K562 (cell line): ENCODE measurements at regions of chr3 and their contacts with region 1.

Region 1: GRCh38 chr3:50611464-50612233 is at the start of gene CISH:
- DNase-seq: peak; percentile 84 to 97 (median 90)
- ATAC-seq: peak; percentile 85
- H3K4me3 ChIP-seq: peak within 1 kb of the TSS; percentile 87
- H3K27ac ChIP-seq: peak within 1 kb of the TSS; percentile 85
- H3K4me1 ChIP-seq: peaks cover 21 to 39% of the 10 kb centered on the region in 2 experiments; a peak in 4 of 5 replicates
- H3K27me3 ChIP-seq: no peaks in the 10 kb centered on the region
- CTCF ChIP-seq: peak; percentile 18 to 52 (median 39); a peak in 5 of 6 replicates
- EP300 ChIP-seq: peak; percentile 32
- POLR2A ChIP-seq: peak; percentile 81
- RAD21 ChIP-seq: no peak; a peak in 1 of 4 replicates
- polyA plus RNA-seq, gene CISH: 1.7 to 3.5 TPM

Region 2: DNA sequence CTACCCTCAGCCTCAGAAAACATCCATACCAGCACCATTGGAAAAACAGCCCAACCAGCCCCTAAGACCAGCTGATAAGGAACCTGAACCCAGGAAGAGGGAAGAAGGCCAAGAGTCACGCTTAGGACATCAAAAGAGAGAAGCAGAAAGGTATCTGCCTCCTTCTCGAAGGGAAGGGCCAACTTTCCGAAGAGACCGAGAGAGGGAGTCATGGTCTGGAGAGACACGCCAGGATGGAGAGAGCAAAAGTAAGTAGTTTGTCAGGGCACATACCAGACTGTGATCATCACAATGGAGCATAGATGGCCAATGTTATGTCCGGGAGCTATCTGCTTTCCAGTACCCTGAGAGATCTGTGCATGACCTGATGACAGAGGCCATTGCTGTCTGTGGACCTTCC is 553.9 kb before region 1 on chr3:
- CTCF ChIA-PET with region 1: no interaction called
- POLR2A ChIA-PET with region 1: no interaction called
- in situ Hi-C with region 1: no loop called
- intact Hi-C with region 1: no loop called
- DNase-seq: no peak
- ATAC-seq: no peak
- H3K4me3 ChIP-seq: no peak overlapping the region
- H3K27ac ChIP-seq: no peak overlapping the region
- H3K4me1 ChIP-seq: no peaks in the 10 kb centered on the region
- H3K27me3 ChIP-seq: no peaks in the 10 kb centered on the region
- CTCF ChIP-seq: no peak
- EP300 ChIP-seq: no peak
- POLR2A ChIP-seq: no peak
- RAD21 ChIP-seq: no peak

Region 3: GRCh38 chr3:50568947-50569749 is 42.5 kb before region 1 on chr3 and contains the start of gene HEMK1:
- CTCF ChIA-PET with region 1: interaction called, 56 read pairs
- POLR2A ChIA-PET with region 1: interaction called, 10 read pairs
- in situ Hi-C with region 1: no loop called
- intact Hi-C with region 1: loop called (anchors 1 kb)
- DNase-seq: peak; percentile 95 to 98 (median 97)
- ATAC-seq: peak; percentile 90
- H3K4me3 ChIP-seq: peak within 1 kb of the TSS; percentile 90
- H3K27ac ChIP-seq: peak within 1 kb of the TSS; percentile 80
- H3K4me1 ChIP-seq: peaks cover 36 to 42% of the 10 kb centered on the region in 2 experiments; a peak in 4 of 5 replicates
- H3K27me3 ChIP-seq: no peaks in the 10 kb centered on the region
- CTCF ChIP-seq: no peak
- EP300 ChIP-seq: no peak
- POLR2A ChIP-seq: peak; percentile 57
- RAD21 ChIP-seq: no peak
- polyA plus RNA-seq, gene HEMK1: 2.0 to 5.2 TPM

Region 4: DNA sequence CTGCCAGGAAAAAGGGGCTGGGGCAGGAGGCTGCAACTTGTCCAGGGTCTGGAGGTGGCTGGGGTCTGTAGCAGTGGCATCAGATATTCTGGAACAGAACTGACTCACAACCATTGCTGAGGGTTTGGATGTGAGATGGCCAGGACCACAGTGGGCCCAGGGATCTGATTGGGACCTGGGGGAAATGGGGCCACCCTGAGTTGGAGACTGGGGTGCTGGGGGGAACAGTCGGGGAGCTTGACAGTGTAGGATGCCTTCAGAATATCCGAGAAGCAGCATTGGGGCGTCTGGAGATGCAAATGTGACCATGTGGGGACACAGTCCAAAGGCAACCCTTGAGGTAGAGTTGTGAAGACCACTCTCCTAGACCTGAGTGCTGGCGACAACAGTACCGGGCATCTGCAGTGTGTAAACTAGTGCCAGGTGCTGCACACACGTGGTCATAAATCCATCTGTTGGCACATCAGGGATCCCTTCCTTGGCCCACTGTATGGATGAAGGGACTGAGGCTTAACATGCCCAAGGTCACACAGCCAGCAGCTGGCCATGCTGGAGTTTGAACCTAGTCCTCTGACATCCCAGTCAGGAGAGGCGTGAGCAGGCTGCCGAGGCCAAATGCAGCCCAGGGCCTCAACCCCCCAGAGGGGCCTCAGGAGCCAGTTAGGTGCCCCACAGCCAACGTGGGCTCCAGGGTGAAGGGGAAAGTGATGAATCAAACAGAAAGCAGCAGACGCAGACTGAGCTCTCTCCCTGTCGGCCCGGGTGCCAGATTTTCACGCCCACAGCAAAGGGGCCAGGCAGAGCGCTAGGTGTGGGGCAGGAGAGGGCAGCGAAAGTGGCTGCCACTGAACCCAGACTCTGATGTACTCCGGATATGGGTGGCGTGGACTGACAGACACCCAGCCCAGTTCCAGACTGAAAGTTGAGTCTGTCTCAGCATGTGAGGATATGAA is 23.6 kb before region 1 on chr3:
- CTCF ChIA-PET with region 1: no interaction called
- POLR2A ChIA-PET with region 1: interaction called, 22 read pairs
- in situ Hi-C with region 1: no loop called
- intact Hi-C with region 1: loop called (anchors 1 kb)
- DNase-seq: no peak
- ATAC-seq: no peak
- H3K4me3 ChIP-seq: no peak overlapping the region
- H3K27ac ChIP-seq: peak overlapping the region; percentile 93
- H3K4me1 ChIP-seq: peaks cover 49 to 52% of the 10 kb centered on the region in 2 experiments
- H3K27me3 ChIP-seq: no peaks in the 10 kb centered on the region
- CTCF ChIP-seq: no peak
- EP300 ChIP-seq: no peak
- POLR2A ChIP-seq: no peak
- RAD21 ChIP-seq: no peak

Region 5: DNA sequence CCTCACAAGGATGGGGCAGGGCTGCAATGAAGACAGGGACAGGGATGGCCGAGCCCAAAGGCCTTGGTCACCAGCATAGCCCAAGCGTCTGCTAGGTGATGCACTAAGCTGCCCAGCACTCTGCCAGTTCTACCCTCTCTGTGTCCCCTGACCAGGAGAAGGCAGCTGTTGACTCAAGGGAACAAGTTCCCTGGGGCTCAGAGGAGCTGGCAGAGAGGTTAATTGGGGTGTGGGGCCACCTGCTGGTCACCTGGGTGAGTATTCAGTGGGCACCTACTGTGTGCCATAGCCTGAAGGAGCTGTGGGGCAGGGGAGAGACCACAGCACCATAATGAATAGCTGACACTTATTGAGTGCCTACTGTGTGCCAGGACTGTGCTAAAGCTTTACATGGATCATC is 41.1 kb after region 1 on chr3:
- CTCF ChIA-PET with region 1: interaction called, 3 read pairs
- POLR2A ChIA-PET with region 1: interaction called, 3 read pairs
- in situ Hi-C with region 1: no loop called
- intact Hi-C with region 1: loop called (anchors 1 kb)
- DNase-seq: peak; percentile 32 to 51 (median 42)
- ATAC-seq: peak; percentile 78
- H3K4me3 ChIP-seq: no peak overlapping the region
- H3K27ac ChIP-seq: no peak overlapping the region
- H3K4me1 ChIP-seq: peaks cover 0 to 4% of the 10 kb centered on the region in 2 experiments; a peak in 2 of 5 replicates
- H3K27me3 ChIP-seq: peaks cover 0 to 4% of the 10 kb centered on the region in 2 experiments; a peak in 1 of 5 replicates
- CTCF ChIP-seq: peak; percentile 44 to 60 (median 52)
- EP300 ChIP-seq: no peak
- POLR2A ChIP-seq: no peak
- RAD21 ChIP-seq: peak; percentile 30 to 65

Region 6: DNA sequence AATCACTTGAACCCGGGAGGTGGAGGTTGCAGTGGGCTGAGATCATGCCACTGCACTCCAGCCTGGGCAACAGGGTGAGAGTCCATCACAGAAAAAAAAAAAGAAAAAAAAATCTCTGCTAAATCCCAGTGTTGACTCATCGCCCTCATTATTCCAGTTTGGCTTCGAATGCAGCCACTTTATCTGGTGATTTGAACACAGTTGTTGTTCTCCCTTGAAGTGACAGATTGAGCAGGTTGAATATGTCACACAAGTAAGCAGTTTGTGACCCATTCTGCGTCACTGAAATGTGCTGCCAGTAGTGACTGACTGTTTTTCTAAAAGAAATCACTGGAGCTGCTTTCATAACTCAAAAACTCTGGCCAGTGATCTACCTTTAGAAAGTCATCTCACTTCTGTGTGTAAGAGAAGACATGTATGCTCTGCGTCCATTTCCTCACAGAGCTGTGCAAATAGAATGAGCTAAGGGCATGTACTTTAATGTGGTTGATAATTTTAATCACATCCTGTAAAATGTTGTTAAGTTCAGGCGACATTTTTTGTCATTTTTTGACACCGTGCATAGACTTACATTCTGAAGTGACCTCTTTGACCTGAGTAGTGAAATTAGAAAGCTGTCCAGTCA is 75.6 kb after region 1 on chr3:
- CTCF ChIA-PET with region 1: no interaction called
- POLR2A ChIA-PET with region 1: no interaction called
- in situ Hi-C with region 1: no loop called
- intact Hi-C with region 1: no loop called
- DNase-seq: no peak
- ATAC-seq: no peak
- H3K4me3 ChIP-seq: no peak overlapping the region
- H3K27ac ChIP-seq: no peak overlapping the region
- H3K4me1 ChIP-seq: no peaks in the 10 kb centered on the region
- H3K27me3 ChIP-seq: peaks cover 0 to 3% of the 10 kb centered on the region in 2 experiments; a peak in 3 of 5 replicates
- CTCF ChIP-seq: no peak
- EP300 ChIP-seq: no peak
- POLR2A ChIP-seq: no peak
- RAD21 ChIP-seq: no peak

Region 7: GRCh38 chr3:50759015-50759414 is 147.4 kb after region 1 on chr3:
- CTCF ChIA-PET with region 1: no interaction called
- POLR2A ChIA-PET with region 1: no interaction called
- in situ Hi-C with region 1: no loop called
- intact Hi-C with region 1: no loop called
- DNase-seq: no peak
- ATAC-seq: no peak
- H3K4me3 ChIP-seq: no peak overlapping the region
- H3K27ac ChIP-seq: no peak overlapping the region
- H3K4me1 ChIP-seq: no peaks in the 10 kb centered on the region
- H3K27me3 ChIP-seq: no peaks in the 10 kb centered on the region
- CTCF ChIP-seq: no peak
- EP300 ChIP-seq: no peak
- POLR2A ChIP-seq: no peak
- RAD21 ChIP-seq: no peak

Region 8: GRCh38 chr3:51384726-51385473 is 773.3 kb after region 1 on chr3 and contains the start of gene MANF:
- CTCF ChIA-PET with region 1: no interaction called
- POLR2A ChIA-PET with region 1: no interaction called
- in situ Hi-C with region 1: no loop called
- intact Hi-C with region 1: loop called (anchors 10 kb)
- DNase-seq: peak; percentile 96 to 99 (median 98)
- ATAC-seq: peak; percentile 96
- H3K4me3 ChIP-seq: peak within 1 kb of the TSS; percentile 82
- H3K27ac ChIP-seq: peak within 1 kb of the TSS; percentile 94
- H3K4me1 ChIP-seq: peaks cover 8 to 18% of the 10 kb centered on the region in 2 experiments
- H3K27me3 ChIP-seq: no peaks in the 10 kb centered on the region
- CTCF ChIP-seq: no peak
- EP300 ChIP-seq: no peak
- POLR2A ChIP-seq: peak; percentile 82
- RAD21 ChIP-seq: no peak
- polyA plus RNA-seq, gene MANF: 6.5 to 7.1 TPM